Natural killer cell (primary cell): ENCODE measurements at regions of chr11 and their contacts with region 1.

Region 1: GRCh38 chr11:62726915-62727763 is at the start of gene HNRNPUL2:
- DNase-seq: peak; percentile 97 to 100
- ATAC-seq: peak; percentile 82 to 91 (median 84)
- H3K4me3 ChIP-seq: peak within 1 kb of the TSS; percentile 91
- H3K4me3 Mint-ChIP-seq: peak within 1 kb of the TSS; percentile 98
- H3K27ac ChIP-seq: peak within 1 kb of the TSS; percentile 88
- H3K27ac Mint-ChIP-seq: peak within 1 kb of the TSS; percentile 99
- H3K4me1 ChIP-seq: peaks cover 44% of the 10 kb centered on the region
- H3K4me1 Mint-ChIP-seq: peaks cover 46 to 60% of the 10 kb centered on the region in 2 donors
- H3K27me3 ChIP-seq: no peaks in the 10 kb centered on the region
- H3K27me3 Mint-ChIP-seq: no peaks in the 10 kb centered on the region
- CTCF ChIP-seq: no peak
- total RNA-seq, gene HNRNPUL2: 58.0 to 73.1 (median 69.3) TPM

Region 2: GRCh38 chr11:62665075-62665598 is 62.0 kb before region 1 on chr11 and contains the starts of genes C11orf98 and CSKMT:
- intact Hi-C with region 1: loop called (anchors 5 kb)
- DNase-seq: peak; percentile 96
- ATAC-seq: peak; percentile 92 to 97 (median 95)
- H3K4me3 ChIP-seq: peak within 1 kb of the TSS; percentile 87
- H3K4me3 Mint-ChIP-seq: peak within 1 kb of the TSS; percentile 96
- H3K27ac ChIP-seq: peak within 1 kb of the TSS; percentile 80
- H3K27ac Mint-ChIP-seq: peak within 1 kb of the TSS; percentile 87 to 95
- H3K4me1 ChIP-seq: peaks cover 28% of the 10 kb centered on the region
- H3K4me1 Mint-ChIP-seq: peaks cover 6 to 29% of the 10 kb centered on the region in 2 donors
- H3K27me3 ChIP-seq: no peaks in the 10 kb centered on the region
- H3K27me3 Mint-ChIP-seq: no peaks in the 10 kb centered on the region
- CTCF ChIP-seq: no peak
- total RNA-seq, gene C11orf98: 36.5 to 57.9 (median 39.1) TPM
- total RNA-seq, gene CSKMT: 12.0 to 21.5 (median 13.7) TPM

Region 3: DNA sequence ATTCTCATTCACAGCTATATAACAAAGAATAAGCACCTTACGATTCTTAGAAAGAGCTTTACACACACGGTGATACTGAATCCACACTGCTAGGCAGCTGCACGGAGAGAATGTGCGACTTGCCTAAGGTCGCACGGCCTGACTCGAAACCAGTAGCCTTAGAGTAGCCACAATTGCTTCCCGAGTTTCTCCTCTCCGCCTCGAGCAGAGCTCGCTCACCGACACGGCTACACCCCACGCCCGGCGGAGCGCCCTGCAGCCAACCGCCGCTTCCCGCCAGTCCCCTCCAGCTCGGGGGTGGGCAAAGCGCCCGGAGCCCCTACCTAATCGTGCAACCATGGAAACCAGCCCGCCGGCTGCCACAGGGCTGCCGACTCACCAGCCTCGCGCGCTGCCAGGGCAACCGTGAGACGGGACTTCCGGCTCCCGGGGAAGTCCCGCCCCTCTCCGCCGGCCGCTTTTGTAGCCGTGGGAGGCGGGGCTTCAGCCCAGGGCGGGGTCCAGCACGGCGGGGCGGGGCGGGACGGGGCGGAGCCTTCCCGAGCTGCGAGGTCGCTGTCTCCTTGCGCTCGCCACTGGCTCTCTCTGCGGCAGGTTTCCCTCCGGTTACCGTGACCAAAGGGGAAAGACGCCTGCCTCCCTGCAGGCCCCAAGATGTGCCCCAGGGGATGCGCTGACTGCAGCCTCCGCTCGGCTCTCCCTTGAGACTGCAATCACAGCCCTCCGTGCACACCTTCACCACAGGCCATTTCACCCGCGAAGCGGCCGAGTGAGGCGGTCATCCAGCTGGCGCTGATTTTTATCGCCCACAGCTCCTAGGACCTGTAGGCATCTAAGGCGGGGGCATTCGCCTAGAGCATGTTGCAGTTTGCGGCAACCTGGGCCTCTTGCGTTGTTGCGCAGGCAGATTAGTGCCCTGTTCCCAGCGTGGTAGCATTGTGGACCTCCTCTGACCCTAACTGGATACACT is 21.0 kb before region 1 on chr11:
- intact Hi-C with region 1: loop called (anchors 1 kb)
- DNase-seq: peak; percentile 93 to 97
- ATAC-seq: peak; percentile 74 to 87 (median 77)
- H3K4me3 ChIP-seq: peak overlapping the region; percentile 70
- H3K4me3 Mint-ChIP-seq: peak overlapping the region; percentile 94
- H3K27ac ChIP-seq: peak overlapping the region; percentile 89
- H3K27ac Mint-ChIP-seq: peak overlapping the region; percentile 91 to 97
- H3K4me1 ChIP-seq: peaks cover 50% of the 10 kb centered on the region
- H3K4me1 Mint-ChIP-seq: peaks cover 36 to 41% of the 10 kb centered on the region in 2 donors
- H3K27me3 ChIP-seq: no peaks in the 10 kb centered on the region
- H3K27me3 Mint-ChIP-seq: no peaks in the 10 kb centered on the region
- CTCF ChIP-seq: no peak

Region 4: DNA sequence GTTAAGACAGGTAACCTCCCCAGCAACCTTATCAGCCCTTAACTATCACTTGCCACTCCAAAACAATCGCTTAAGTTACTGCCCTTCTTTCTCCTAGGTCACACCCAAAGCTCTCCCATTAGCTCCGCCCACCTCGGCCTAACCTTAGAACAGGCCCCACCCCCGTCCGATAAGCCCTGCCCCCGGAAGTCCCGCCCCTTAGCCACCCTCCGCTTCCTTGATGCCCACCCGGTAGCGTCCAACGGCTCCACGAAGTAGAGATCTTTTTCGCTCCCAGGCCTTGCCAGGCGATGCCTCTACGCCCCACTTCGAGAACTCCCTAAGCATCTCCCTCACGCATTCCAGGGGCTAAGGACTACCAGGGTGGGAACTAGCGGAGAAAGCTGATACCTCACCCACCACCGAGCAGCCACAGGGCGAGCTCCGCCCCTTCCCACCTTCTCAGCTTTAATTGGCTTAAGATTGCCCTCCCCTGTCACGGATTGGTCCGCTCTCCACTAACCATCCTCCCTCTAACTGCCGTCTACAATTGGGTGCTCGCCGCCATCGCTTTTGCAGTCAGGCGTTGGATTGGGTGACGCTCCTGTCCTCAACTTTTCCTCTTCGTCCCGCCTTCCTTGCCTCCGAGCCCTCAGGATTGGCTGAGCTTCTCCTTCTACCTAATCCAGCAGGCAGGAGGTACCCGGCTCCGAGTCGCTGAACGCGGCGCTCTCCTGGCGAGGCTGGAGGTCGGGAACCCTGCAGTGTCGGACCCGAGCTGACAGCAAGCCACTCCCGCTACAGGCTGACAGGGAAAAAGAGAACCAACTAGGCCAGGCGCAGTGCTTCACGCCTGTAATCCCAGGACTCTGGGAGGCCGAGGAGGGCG is 26.8 kb after region 1 on chr11 and contains the start of gene ZBTB3:
- intact Hi-C with region 1: loop called (anchors 1 kb)
- DNase-seq: peak; percentile 93 to 99
- ATAC-seq: peak; percentile 92 to 98 (median 94)
- H3K4me3 ChIP-seq: peak within 1 kb of the TSS; percentile 83
- H3K4me3 Mint-ChIP-seq: peak within 1 kb of the TSS; percentile 96
- H3K27ac ChIP-seq: peak within 1 kb of the TSS; percentile 81
- H3K27ac Mint-ChIP-seq: peak within 1 kb of the TSS; percentile 91 to 96
- H3K4me1 ChIP-seq: peaks cover 22% of the 10 kb centered on the region
- H3K4me1 Mint-ChIP-seq: peaks cover 9 to 10% of the 10 kb centered on the region in 2 donors
- H3K27me3 ChIP-seq: no peaks in the 10 kb centered on the region
- H3K27me3 Mint-ChIP-seq: no peaks in the 10 kb centered on the region
- CTCF ChIP-seq: no peak
- total RNA-seq, gene ZBTB3: 5.4 to 9.6 (median 8.8) TPM

Region 5: GRCh38 chr11:62771144-62772021 is 44.2 kb after region 1 on chr11 and contains the start of gene TAF6L:
- intact Hi-C with region 1: no loop called
- DNase-seq: peak; percentile 89 to 92
- ATAC-seq: peak; percentile 87 to 95 (median 89)
- H3K4me3 ChIP-seq: peak within 1 kb of the TSS; percentile 70
- H3K4me3 Mint-ChIP-seq: peak within 1 kb of the TSS; percentile 93
- H3K27ac ChIP-seq: peak within 1 kb of the TSS; percentile 80
- H3K27ac Mint-ChIP-seq: peak within 1 kb of the TSS; percentile 93 to 99
- H3K4me1 ChIP-seq: peaks cover 25% of the 10 kb centered on the region
- H3K4me1 Mint-ChIP-seq: peaks cover 17 to 25% of the 10 kb centered on the region in 2 donors
- H3K27me3 ChIP-seq: no peaks in the 10 kb centered on the region
- H3K27me3 Mint-ChIP-seq: no peaks in the 10 kb centered on the region
- CTCF ChIP-seq: no peak
- total RNA-seq, gene TAF6L: 18.4 to 20.3 (median 18.8) TPM

Region 6: DNA sequence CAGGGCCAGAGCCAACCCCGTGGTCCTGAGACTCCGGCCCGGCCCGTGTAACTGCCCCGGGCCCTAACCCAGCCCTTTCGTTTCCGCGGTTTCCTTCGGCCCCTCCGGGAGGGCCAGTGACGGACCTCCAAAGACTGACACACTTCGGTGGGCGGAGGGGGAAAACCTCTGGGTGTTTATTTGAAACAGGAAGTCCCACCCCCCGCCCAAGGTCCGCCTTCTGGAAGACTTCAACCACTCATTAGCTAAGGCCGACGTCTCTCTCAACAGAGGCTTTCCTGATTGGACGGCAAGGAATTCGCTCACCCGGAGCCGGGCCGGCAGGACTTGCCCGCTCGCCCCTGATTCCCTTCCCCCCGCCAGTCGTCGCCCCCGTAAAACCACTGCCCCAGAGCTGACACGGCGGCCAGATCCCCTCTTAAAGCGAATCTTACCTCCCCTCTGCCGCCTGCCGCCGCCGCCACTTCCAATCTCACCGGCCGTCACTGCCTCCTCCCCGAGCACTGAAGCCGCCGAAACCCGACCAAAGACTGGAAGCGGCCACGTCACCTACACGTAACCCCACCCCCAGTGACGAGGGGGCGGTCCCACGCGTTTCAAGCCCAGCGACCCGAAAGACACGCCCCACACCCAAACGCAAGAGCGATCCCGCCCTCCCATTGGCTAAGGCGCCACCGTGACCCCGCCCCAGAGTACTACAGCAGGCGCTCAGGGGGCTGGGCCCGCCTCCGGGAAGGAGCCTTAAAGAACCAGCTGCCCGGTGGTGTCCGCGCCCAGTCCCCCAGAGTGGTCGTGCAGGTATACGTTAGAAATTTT is 104.6 kb after region 1 on chr11 and contains the start of gene STX5:
- intact Hi-C with region 1: loop called (anchors 2 kb)
- DNase-seq: peak; percentile 100
- ATAC-seq: peak; percentile 90 to 98 (median 93)
- H3K4me3 ChIP-seq: peak within 1 kb of the TSS; percentile 87
- H3K4me3 Mint-ChIP-seq: peak within 1 kb of the TSS; percentile 97
- H3K27ac ChIP-seq: peak within 1 kb of the TSS; percentile 93
- H3K27ac Mint-ChIP-seq: peak within 1 kb of the TSS; percentile 99 to 100
- H3K4me1 ChIP-seq: peaks cover 22% of the 10 kb centered on the region
- H3K4me1 Mint-ChIP-seq: peaks cover 27 to 42% of the 10 kb centered on the region in 2 donors
- H3K27me3 ChIP-seq: no peaks in the 10 kb centered on the region
- H3K27me3 Mint-ChIP-seq: no peaks in the 10 kb centered on the region
- CTCF ChIP-seq: no peak
- total RNA-seq, gene STX5: 138 to 171 (median 166) TPM

Region 7: GRCh38 chr11:62860835-62861563 is 133.9 kb after region 1 on chr11:
- intact Hi-C with region 1: loop called (anchors 2 kb)
- DNase-seq: no peak
- ATAC-seq: no peak
- H3K4me3 ChIP-seq: no peak overlapping the region
- H3K4me3 Mint-ChIP-seq: no peak overlapping the region
- H3K27ac ChIP-seq: no peak overlapping the region
- H3K27ac Mint-ChIP-seq: no peak overlapping the region
- H3K4me1 ChIP-seq: peaks cover 17% of the 10 kb centered on the region
- H3K4me1 Mint-ChIP-seq: peaks cover 12% of the 10 kb centered on the region in 2 donors
- H3K27me3 ChIP-seq: no peaks in the 10 kb centered on the region
- H3K27me3 Mint-ChIP-seq: no peaks in the 10 kb centered on the region
- CTCF ChIP-seq: no peak

Region 8: GRCh38 chr11:62880803-62881578 is 153.9 kb after region 1 on chr11 and contains the start of gene SLC3A2:
- intact Hi-C with region 1: loop called (anchors 1 kb)
- DNase-seq: peak; percentile 88 to 94
- ATAC-seq: peak; percentile 72 to 89 (median 80)
- H3K4me3 ChIP-seq: peak within 1 kb of the TSS; percentile 100
- H3K4me3 Mint-ChIP-seq: peak within 1 kb of the TSS; percentile 100
- H3K27ac ChIP-seq: peak within 1 kb of the TSS; percentile 90
- H3K27ac Mint-ChIP-seq: peak within 1 kb of the TSS; percentile 99
- H3K4me1 ChIP-seq: peaks cover 36% of the 10 kb centered on the region
- H3K4me1 Mint-ChIP-seq: peaks cover 41 to 56% of the 10 kb centered on the region in 2 donors
- H3K27me3 ChIP-seq: no peaks in the 10 kb centered on the region
- H3K27me3 Mint-ChIP-seq: no peaks in the 10 kb centered on the region
- CTCF ChIP-seq: peak; percentile 82
- total RNA-seq, gene SLC3A2: 200 to 235 (median 207) TPM